ENCODE measurements at regions of chrX and their contacts with region 1.

Region 1: DNA sequence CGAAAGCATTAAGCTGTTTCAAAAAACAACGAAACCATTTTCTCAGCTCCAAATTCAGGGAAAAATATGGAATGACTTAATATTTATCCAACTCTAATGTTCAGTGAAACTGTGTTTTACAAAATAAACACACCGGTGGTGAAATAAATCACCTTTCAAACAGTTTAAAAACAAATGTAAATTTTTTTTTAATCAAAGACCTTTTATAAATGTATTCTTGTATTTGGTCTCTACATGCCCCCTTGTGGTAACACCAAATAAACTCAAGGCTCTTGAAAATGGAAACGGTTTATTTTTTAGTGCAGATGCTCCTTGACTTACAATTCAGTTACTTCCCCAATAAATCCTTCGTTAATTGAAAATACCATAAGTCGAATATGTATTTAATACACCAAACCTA is 45.8 kb upstream of the ITM2A start:
- DNase-seq: peak in 2 of 4 experiments; percentile 7 to 23
- ATAC-seq: no peak
- H3K4me3 ChIP-seq: no peak overlapping the region
- H3K27ac ChIP-seq: no peak overlapping the region
- H3K4me1 ChIP-seq: no peaks in the 10 kb centered on the region
- H3K27me3 ChIP-seq: no peaks in the 10 kb centered on the region
- CTCF ChIP-seq: peak in 2 of 3 experiments; percentile 11 to 50; a peak in 3 of 6 replicates
- EP300 ChIP-seq: no peak
- POLR2A ChIP-seq: no peak
- RAD21 ChIP-seq: peak in 1 of 2 experiments; percentile 46; a peak in 2 of 4 replicates

Region 2: DNA sequence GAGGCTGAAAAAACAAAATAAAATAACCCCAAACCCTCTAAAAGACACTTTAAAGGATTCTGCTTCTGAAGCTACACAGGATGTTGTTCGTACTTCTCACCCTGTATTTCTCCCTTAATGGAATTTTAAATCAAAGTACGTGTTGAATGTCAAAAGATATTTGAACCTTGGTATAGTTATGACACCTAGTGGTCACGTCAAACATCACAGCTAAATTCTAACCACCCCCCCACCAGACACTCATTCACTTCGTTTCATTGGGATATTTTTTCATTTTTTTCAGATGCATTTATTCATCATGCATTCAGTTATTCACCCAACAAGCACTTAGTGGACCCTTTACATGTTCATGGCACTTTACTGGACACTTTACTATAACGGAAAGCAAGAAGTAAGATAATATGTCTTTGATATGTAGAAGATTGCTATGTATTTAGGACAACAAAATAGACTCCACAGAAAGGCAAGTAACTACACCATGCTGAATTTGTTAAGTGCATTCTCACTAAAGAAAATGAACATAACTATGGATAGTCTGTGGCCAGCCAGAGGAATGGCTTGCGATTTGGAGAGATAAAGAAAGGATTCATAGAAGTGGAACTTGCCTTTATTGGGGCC is 331.0 kb before region 1 on chrX:
- CTCF ChIA-PET with region 1: no interaction called
- POLR2A ChIA-PET with region 1: no interaction called
- in situ Hi-C with region 1: no loop called
- intact Hi-C with region 1: loop called (anchors 5 kb)
- DNase-seq: peak; percentile 10 to 21 (median 16)
- ATAC-seq: no peak
- H3K4me3 ChIP-seq: no peak overlapping the region
- H3K27ac ChIP-seq: no peak overlapping the region
- H3K4me1 ChIP-seq: no peaks in the 10 kb centered on the region
- H3K27me3 ChIP-seq: no peaks in the 10 kb centered on the region
- CTCF ChIP-seq: peak in 2 of 3 experiments; percentile 48 to 52; a peak in 4 of 6 replicates
- EP300 ChIP-seq: no peak
- POLR2A ChIP-seq: no peak
- RAD21 ChIP-seq: peak; percentile 25 to 58; a peak in 3 of 4 replicates

Region 3: GRCh38 chrX:79270401-79270800 is 142.6 kb before region 1 on chrX:
- CTCF ChIA-PET with region 1: no interaction called
- POLR2A ChIA-PET with region 1: no interaction called
- in situ Hi-C with region 1: no loop called
- intact Hi-C with region 1: loop called (anchors 5 kb)
- DNase-seq: peak in 2 of 4 experiments; percentile 2 to 34
- ATAC-seq: peak; percentile 78
- H3K4me3 ChIP-seq: no peak overlapping the region
- H3K27ac ChIP-seq: no peak overlapping the region
- H3K4me1 ChIP-seq: no peaks in the 10 kb centered on the region
- H3K27me3 ChIP-seq: no peaks in the 10 kb centered on the region
- CTCF ChIP-seq: peak; percentile 31 to 34 (median 31); a peak in 3 of 6 replicates
- EP300 ChIP-seq: no peak
- POLR2A ChIP-seq: no peak
- RAD21 ChIP-seq: peak in 1 of 2 experiments; percentile 24; a peak in 2 of 4 replicates

Region 4: GRCh38 chrX:79288733-79289132 is 124.2 kb before region 1 on chrX:
- CTCF ChIA-PET with region 1: no interaction called
- POLR2A ChIA-PET with region 1: no interaction called
- in situ Hi-C with region 1: no loop called
- intact Hi-C with region 1: no loop called
- DNase-seq: no peak
- ATAC-seq: no peak
- H3K4me3 ChIP-seq: no peak overlapping the region
- H3K27ac ChIP-seq: no peak overlapping the region
- H3K4me1 ChIP-seq: no peaks in the 10 kb centered on the region
- H3K27me3 ChIP-seq: no peaks in the 10 kb centered on the region
- CTCF ChIP-seq: no peak
- EP300 ChIP-seq: no peak
- POLR2A ChIP-seq: no peak
- RAD21 ChIP-seq: no peak

Region 5: GRCh38 chrX:79366873-79367749 is 45.9 kb before region 1 on chrX and contains the start of gene ITM2A:
- CTCF ChIA-PET with region 1: no interaction called
- POLR2A ChIA-PET with region 1: no interaction called
- in situ Hi-C with region 1: no loop called
- intact Hi-C with region 1: loop called (anchors 5 kb)
- DNase-seq: peak; percentile 47 to 85 (median 54)
- ATAC-seq: peak; percentile 88
- H3K4me3 ChIP-seq: peak within 1 kb of the TSS; percentile 52
- H3K27ac ChIP-seq: peak within 1 kb of the TSS; percentile 78
- H3K4me1 ChIP-seq: no peaks in the 10 kb centered on the region; a peak in 2 of 5 replicates
- H3K27me3 ChIP-seq: no peaks in the 10 kb centered on the region
- CTCF ChIP-seq: no peak
- EP300 ChIP-seq: peak; percentile 41; the same call in 1 of the 2 replicates
- POLR2A ChIP-seq: peak; percentile 55
- RAD21 ChIP-seq: no peak
- polyA plus RNA-seq, gene ITM2A: 105 to 117 TPM

Region 6: DNA sequence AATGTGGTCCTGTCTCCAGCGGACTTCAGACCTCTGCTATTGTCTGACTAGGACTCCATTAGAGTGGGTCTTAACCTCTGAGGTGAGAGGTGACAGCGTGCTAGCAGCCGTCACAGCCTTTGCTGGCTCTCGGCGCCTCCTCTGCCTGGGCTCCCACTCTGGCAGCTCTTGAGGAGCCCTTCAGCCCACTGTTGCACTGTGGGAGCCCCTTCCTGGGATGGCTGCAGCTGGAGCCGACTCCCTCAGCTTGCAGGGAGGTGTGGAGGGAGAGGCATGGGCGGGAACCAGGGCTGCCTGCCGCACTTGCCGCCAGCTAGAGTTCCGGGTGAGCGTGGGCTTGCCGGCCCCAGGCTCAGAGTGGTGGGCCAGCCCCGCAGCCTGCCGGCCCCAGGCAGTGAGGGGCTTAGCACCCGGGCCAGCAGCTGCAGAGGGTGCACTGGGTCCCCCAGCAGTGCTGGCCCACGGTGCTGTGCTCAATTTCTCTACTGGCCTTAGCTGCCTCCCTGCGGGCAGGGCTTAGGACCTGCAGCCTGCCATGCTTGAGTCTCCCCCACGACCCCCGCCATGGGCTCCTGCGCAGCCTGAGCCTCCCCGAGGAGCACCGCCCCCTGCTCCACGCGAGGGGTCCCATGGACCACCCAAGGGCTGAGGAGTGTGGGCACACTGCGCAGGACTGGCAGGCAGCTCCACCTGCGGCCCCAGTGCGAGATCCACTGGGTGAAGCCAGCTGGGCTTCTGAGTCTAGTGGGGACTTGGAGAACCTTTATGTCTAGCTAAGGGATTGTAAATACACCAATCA is 117.5 kb after region 1 on chrX:
- CTCF ChIA-PET with region 1: no interaction called
- POLR2A ChIA-PET with region 1: no interaction called
- in situ Hi-C with region 1: no loop called
- intact Hi-C with region 1: no loop called
- DNase-seq: no peak
- ATAC-seq: no peak
- H3K4me3 ChIP-seq: no peak overlapping the region
- H3K27ac ChIP-seq: no peak overlapping the region
- H3K4me1 ChIP-seq: no peaks in the 10 kb centered on the region
- H3K27me3 ChIP-seq: no peaks in the 10 kb centered on the region
- CTCF ChIP-seq: no peak
- EP300 ChIP-seq: no peak
- POLR2A ChIP-seq: no peak
- RAD21 ChIP-seq: no peak